ENCODE measurements at regions of chr17 and their contacts with region 1.

Region 1: DNA sequence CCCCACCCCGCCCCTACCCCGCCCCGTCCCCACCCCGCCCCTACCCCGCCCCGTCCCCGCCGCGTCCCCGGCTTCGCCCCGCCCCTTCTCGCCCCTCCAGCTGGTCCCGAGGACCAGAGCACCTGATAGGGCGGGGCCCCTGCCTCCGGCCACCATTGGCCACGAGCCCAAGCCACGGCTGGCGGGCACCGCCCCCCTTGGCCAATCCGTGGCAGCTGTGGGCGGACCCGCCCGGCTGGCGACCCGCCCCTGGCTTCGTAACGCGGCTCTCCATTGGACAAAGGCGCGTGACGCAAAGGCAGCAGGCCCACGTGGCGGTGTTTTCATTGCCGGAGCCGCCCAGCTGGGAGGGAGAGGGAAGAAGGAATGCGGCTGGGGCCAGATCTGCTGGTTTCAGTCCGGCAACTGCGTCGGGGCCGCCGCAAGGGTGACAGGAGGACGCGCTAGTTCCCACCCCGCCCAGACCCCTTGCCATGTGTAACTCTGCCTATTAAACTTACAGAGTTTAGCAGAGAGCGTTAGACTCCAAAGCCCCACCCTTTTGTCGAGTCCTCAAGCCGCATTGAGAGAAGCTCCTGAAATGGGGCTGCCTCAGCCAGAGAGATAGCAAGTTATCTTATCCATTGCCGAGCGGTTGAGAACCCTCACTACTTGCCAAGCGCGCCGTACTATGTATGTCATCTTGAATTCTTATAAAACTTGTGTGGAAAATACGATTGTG is 403 bp upstream of the WIPI1 start:
- DNase-seq: peak; percentile 96
- H3K4me3 Mint-ChIP-seq: peak overlapping the region; percentile 75
- H3K27ac Mint-ChIP-seq: peak overlapping the region; percentile 68
- H3K4me1 Mint-ChIP-seq: peaks cover 53% of the 10 kb centered on the region
- H3K27me3 Mint-ChIP-seq: peaks cover 2% of the 10 kb centered on the region

Region 2: DNA sequence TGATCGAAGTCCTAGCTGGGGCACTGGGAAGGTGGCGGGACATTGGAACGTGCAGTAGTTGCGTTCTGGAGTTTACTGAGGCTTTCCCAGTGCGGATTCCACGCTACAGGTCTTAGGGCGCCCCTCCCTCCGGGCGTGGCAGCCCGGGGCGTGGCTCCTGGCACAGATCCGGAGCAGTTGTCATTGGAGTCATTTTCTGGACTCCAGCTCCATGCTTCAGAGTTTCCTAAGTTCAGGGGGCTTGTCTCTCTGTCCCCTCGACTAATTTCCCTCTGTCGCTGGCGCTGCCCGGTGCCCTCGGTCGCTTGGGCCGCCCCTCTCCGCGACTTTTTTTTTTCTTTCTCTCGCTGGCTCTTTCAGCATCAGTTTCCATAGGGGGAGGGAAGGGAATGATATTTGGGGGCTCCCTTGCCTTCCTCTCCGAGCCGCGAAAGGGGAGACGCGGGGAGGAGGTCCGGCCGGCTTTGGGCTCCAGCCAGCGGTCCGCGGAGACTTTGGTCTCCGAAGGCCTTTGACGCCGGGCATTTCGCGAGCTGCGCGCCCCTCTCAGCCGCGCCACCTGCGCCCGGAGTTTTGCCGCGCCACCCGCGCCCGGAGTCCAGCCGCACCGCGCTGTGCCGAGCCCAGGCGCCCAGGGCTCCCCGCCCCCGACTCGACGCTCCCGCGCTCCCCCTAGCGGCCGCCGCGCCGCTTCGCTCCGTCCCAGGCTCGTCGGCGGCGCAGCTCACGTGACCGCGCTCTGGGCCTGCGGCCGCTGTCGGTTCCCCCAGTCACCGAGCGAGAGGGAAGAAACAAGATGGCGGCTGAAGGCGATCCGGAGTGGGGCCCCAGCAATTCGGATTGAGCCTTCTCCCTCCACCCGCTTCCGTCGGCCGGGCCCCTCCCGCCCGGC is 632.7 kb before region 1 on chr17 and contains the start of gene BPTF:
- CTCF ChIA-PET with region 1: no interaction called
- intact Hi-C with region 1: loop called (anchors 10 kb)
- DNase-seq: peak; percentile 93
- H3K4me3 Mint-ChIP-seq: peak within 1 kb of the TSS; percentile 99
- H3K27ac Mint-ChIP-seq: peak within 1 kb of the TSS; percentile 98
- H3K4me1 Mint-ChIP-seq: peaks cover 27% of the 10 kb centered on the region
- H3K27me3 Mint-ChIP-seq: peaks cover 2% of the 10 kb centered on the region
- total RNA-seq, gene BPTF: 58.1 to 61.9 TPM

Region 3: GRCh38 chr17:68179926-68180285 is 277.8 kb before region 1 on chr17:
- CTCF ChIA-PET with region 1: interaction called, 3 read pairs
- intact Hi-C with region 1: loop called (anchors 1 kb)
- DNase-seq: no peak
- H3K4me3 Mint-ChIP-seq: no peak overlapping the region
- H3K27ac Mint-ChIP-seq: no peak overlapping the region
- H3K4me1 Mint-ChIP-seq: peaks cover 41% of the 10 kb centered on the region
- H3K27me3 Mint-ChIP-seq: no peaks in the 10 kb centered on the region

Region 4: GRCh38 chr17:68255731-68256538 is 201.8 kb before region 1 on chr17:
- CTCF ChIA-PET with region 1: interaction called, 45 read pairs
- intact Hi-C with region 1: loop called (anchors 1 kb)
- DNase-seq: peak; percentile 54
- H3K4me3 Mint-ChIP-seq: no peak overlapping the region
- H3K27ac Mint-ChIP-seq: peak overlapping the region; percentile 92
- H3K4me1 Mint-ChIP-seq: peaks cover 76% of the 10 kb centered on the region
- H3K27me3 Mint-ChIP-seq: no peaks in the 10 kb centered on the region

Region 5: DNA sequence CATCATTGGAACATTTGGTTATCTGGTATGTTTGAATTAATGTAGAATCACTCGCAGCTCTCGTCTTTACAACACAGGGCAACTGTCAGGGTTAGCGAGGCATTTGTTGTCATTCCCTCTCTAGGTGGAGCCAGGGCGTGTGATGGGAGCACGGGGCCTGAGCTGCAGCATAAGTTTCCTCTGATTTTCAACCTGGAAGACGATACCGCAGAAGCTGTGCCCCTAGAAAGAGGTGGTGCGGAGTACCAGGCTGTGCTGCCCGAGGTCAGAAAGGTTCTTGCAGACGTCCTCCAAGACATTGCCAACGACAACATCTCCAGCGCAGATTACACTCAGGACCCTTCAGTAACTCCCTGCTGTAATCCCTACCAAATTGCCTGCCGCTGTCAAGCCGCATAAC is 37.6 kb before region 1 on chr17:
- CTCF ChIA-PET with region 1: interaction called, 3 read pairs
- intact Hi-C with region 1: loop called (anchors 2 kb)
- DNase-seq: no peak
- H3K4me3 Mint-ChIP-seq: no peak overlapping the region
- H3K27ac Mint-ChIP-seq: no peak overlapping the region
- H3K4me1 Mint-ChIP-seq: peaks cover 15% of the 10 kb centered on the region
- H3K27me3 Mint-ChIP-seq: no peaks in the 10 kb centered on the region